ENCODE measurements at regions of chrX and their contacts with region 1.

Region 1: DNA sequence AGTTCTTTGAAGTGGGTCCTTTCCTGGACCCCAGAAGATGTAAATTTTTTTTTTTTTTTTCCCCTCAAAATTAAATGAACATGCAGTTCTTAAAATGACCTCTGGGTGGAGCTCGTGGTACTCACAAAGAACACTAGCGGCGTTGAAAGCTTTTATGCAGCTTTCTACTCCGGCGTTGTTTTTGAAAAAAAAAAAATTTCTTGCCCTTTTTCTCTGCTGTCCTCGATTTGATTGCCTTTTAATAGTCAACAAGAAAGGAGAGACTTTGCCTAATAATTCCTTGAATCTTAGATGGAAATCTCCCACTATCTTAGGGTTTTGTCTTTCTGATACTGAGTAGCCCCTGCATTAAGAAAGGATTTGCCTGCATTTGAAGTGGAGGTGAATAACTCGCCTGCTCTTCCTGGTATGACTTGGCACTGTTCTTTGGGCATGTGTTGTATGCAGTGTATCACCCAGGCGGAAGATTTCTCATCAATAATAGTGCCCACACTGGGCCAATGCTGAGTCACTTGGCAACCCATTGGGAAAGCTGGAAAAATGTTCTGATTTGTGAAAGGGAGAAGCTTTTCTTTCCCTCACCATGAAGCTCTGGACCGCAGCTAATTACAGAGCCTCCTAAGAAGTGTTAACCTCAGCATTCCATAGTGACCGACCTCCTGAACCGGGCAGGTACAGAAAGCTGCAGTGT is 104.0 kb downstream of the PHEX start:
- DNase-seq: no peak
- H3K4me3 Mint-ChIP-seq: no peak overlapping the region
- H3K27ac Mint-ChIP-seq: no peak overlapping the region
- H3K4me1 Mint-ChIP-seq: peaks cover 14% of the 10 kb centered on the region
- H3K27me3 Mint-ChIP-seq: no peaks in the 10 kb centered on the region

Region 2: GRCh38 chrX:22192417-22193060 is 56.4 kb after region 1 on chrX:
- CTCF ChIA-PET with region 1: interaction called, 14 read pairs
- POLR2A ChIA-PET with region 1: no interaction called
- intact Hi-C with region 1: loop called (anchors 1 kb)
- DNase-seq: peak; percentile 62
- H3K4me3 Mint-ChIP-seq: no peak overlapping the region
- H3K27ac Mint-ChIP-seq: no peak overlapping the region
- H3K4me1 Mint-ChIP-seq: peaks cover 3% of the 10 kb centered on the region
- H3K27me3 Mint-ChIP-seq: no peaks in the 10 kb centered on the region

Region 3: GRCh38 chrX:22481436-22481835 is 345.3 kb after region 1 on chrX:
- CTCF ChIA-PET with region 1: no interaction called
- POLR2A ChIA-PET with region 1: no interaction called
- intact Hi-C with region 1: no loop called
- DNase-seq: no peak
- H3K4me3 Mint-ChIP-seq: no peak overlapping the region
- H3K27ac Mint-ChIP-seq: no peak overlapping the region
- H3K4me1 Mint-ChIP-seq: no peaks in the 10 kb centered on the region
- H3K27me3 Mint-ChIP-seq: no peaks in the 10 kb centered on the region

Region 4: DNA sequence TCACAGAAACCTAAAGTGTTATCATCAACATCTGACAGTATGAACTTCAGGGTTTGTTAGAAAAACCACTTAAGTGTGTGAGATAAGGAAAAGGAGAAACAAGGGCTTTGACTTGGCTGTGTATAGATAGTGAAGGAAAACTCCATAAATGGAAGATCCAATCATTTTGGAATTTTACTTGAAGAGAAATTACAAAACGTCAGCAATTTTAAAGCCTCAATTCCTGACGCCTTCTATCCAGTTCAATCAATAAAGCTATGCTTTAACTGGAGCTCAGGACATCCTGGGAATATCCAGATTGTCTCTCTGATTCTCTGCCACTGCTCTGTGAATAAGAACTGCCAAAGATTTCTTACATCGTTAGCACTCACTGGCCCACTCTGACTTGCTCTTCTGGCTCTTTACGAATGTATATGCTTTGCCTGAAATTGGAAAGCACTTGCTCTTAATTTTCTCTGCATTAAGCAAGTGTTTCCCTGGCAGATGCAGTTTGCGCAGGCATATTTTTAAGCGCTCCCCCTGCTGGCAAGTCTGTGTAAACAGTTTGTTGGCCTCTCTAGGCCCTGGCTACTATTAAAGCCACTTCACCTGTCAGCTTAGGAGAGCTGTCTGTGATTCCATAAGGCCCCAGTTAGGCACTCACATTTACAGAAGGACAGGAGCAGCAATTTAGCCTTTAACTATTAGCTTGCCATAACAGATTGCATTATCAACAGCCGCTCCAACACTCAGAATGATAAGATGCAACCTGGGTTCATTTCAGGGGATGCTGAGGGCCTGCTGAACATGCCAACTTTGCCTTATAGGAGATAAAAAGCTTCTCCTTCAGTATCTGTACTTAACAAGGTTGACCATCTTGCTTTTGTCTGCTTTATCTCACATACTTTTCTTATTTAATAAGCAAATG is 612.2 kb after region 1 on chrX:
- CTCF ChIA-PET with region 1: interaction called, 30 read pairs
- POLR2A ChIA-PET with region 1: no interaction called
- intact Hi-C with region 1: loop called (anchors 1 kb)
- DNase-seq: peak; percentile 32
- H3K4me3 Mint-ChIP-seq: no peak overlapping the region
- H3K27ac Mint-ChIP-seq: no peak overlapping the region
- H3K4me1 Mint-ChIP-seq: no peaks in the 10 kb centered on the region
- H3K27me3 Mint-ChIP-seq: no peaks in the 10 kb centered on the region

Measured in activated CD4-positive, alpha-beta memory T cell treated with anti-CD3 and anti-CD28 coated beads for 36 hours (primary cell).